GM18951 (cell line): ENCODE measurements at regions of chr17 and their contacts with region 1.

Region 1: DNA sequence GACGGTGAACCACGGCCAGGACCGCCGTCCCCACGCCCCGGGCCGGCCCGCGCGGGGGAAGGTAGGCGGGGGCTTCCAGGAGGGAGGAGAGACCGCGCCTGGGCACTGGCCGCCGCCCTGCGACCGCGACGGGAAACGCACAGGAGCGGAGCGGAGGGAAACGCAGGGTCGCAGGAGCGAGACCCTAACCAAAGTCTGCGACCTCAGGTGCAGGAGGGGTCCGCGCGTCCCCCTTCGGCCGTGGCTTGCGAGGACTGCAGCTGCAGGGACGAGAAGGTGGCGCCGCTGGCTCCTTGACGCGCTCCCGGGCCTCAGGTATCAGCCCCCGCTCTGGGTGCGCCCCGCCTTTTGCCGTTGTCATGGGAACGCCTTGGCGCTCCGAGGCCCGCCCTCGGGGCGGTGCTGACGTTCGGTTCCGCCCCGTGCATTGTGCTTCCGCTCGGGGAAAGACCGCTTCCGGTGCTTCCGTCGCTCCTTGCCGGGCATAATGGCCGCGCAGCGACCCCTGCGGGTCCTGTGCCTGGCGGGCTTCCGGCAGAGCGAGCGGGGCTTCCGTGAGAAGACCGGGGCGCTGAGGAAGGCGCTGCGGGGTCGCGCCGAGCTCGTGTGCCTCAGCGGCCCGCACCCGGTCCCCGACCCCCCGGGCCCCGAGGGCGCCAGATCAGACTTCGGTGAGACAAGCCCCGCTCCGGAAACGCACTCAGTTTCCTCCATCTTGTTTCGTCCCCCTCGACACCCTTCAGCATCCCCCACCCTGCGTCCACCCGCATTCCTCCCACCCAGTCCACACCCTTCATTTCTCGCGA is at the start of gene OVCA2:
- POLR2A ChIP-seq: peak; percentile 84

Region 2: GRCh38 chr17:1716076-1716995 is 325.4 kb before region 1 on chr17:
- in situ Hi-C with region 1: loop called (anchors 25 kb)
- POLR2A ChIP-seq: peak; percentile 90

Region 3: DNA sequence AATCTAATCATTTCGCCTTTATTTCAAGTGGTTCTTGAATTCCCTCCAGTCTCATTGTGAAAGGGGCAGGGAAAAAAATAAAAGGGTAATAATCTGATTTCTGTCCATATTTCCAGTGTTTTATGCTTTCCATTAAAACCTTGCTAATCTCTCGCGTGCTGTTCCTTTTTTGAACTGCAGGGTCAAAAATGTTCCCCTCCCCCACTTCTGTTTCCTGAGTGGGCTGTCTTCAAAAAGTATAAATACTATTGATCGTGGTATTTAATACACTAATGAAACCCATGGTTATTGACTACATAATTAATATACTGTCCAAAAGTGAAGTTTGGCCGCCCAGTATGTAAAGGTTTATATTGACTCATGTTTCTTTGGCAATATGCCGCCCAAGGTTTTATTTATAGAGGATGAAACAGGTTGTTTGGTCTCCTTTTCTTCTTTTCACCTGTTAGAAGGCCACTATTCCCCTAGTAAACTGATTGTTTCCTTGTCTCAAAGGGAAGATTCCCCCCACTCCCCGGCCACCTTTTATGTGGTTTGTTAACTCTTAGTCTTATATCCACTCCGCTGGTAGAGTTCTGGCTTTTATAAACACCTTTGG is 142.3 kb before region 1 on chr17:
- in situ Hi-C with region 1: no loop called
- POLR2A ChIP-seq: no peak

Region 4: DNA sequence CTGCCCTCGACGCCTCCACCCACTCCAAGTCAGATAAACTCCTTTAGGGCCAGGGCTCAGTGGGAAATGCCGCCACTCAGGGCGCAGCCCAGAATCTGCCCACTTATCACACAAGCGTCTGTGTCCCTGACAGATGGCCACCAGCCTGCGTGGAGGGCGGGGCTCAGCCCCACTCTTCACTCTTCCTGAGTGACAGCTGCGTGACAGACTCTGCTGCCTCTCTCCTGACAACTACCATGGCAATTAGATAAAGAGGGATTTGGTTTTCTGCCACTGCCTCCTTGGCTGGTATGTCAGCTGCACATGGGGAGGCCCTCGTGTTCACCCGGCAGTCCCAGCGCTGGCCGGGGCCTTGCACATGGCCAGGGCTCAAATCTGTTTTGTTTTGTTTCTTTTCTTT is 112.8 kb before region 1 on chr17:
- in situ Hi-C with region 1: no loop called
- POLR2A ChIP-seq: no peak

Region 5: DNA sequence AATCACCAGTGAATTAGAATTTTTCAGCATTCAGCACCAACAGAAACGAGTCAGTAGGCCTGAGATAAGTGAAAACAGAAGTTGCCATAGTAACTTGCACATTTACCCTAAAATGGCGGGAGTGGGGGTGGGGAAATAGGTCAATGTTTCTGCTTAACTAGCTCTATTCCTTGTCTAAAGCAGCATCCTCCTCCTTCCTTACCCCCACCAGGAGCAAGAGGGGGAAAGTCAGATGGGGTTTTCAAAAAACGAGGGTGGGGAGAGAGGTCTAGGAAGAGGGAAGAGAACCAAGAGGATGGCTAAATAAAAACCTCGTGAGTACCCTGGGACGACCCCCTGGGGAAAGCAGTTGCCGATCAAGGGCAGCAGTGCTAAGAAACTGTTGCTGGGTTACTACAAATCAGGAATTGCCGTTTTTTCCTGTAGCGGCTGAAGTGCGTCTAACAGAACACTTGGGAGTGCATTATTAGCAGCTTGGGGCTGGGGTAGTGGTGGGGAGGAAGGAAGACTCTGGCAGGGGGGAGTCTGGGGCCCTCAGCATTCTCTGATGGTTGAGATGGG is 393.5 kb after region 1 on chr17:
- in situ Hi-C with region 1: no loop called
- POLR2A ChIP-seq: no peak